ENCODE measurements at regions of chr5 and their contacts with region 1.

Region 1: DNA sequence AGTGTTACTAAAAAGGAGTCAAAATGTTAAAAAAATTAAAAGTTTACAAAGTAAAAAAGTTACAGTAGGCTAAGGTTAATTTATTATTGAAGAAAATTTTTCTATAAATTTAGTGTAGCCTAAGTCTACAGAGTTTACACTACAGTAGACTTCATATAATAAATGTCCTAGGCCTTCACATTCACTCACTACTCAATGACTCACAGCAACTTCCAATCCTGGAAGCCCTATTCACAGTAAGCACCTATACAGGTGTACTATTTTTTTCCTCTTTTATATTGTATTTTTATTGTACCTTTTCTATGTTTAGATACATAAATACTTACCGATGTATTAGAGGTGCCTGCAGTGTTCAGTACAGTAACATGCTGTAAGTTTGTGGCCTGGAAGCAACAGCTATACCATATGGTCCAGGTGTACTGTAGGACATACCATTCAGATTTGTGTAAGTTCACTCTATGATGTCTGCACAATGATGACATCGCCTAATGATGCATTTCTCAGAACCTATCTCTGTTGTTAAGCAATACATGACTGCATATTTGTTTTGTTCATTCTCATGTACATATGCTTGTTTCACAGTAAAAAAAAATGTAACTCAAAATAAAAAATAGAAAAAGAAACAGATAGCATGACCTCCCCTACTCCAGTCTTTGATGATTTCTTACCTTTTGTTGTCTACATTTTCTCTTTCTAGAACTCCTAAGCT is 64.7 kb downstream of the NR3C1 start:
- DNase-seq: peak; percentile 68
- H3K4me3 Mint-ChIP-seq: no peak overlapping the region
- H3K27ac Mint-ChIP-seq: peak overlapping the region; percentile 86
- H3K4me1 Mint-ChIP-seq: peaks cover 39% of the 10 kb centered on the region
- H3K27me3 Mint-ChIP-seq: no peaks in the 10 kb centered on the region
- CTCF ChIP-seq: no peak

Region 2: GRCh38 chr5:142713121-142713706 is 625.6 kb before region 1 on chr5:
- CTCF ChIA-PET with region 1: no interaction called
- POLR2A ChIA-PET with region 1: no interaction called
- intact Hi-C with region 1: no loop called
- DNase-seq: peak; percentile 95
- H3K4me3 Mint-ChIP-seq: peak overlapping the region; percentile 77
- H3K27ac Mint-ChIP-seq: peak overlapping the region; percentile 10
- H3K4me1 Mint-ChIP-seq: peaks cover 19% of the 10 kb centered on the region
- H3K27me3 Mint-ChIP-seq: no peaks in the 10 kb centered on the region
- CTCF ChIP-seq: peak; percentile 99

Region 3: DNA sequence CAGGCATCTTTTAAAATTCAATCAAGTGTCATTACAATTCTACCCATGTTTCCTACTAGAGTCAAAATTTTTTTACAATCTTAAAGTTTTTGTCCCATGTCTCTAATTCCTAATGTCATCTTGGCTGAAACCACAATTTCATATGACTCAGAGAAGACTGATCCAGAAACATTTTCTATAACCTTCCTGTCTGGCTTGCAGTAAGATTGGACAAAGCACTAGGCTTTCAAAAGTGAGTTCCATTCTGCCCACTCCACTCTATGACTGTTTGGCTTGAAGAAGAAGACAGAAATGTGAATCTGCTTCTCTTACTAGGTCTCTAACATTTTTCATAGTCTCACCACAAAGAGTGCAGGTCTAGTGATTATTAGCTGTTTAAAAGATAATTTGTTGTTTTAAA is 24.2 kb before region 1 on chr5:
- CTCF ChIA-PET with region 1: interaction called, 3 read pairs
- POLR2A ChIA-PET with region 1: interaction called, 15 read pairs
- intact Hi-C with region 1: no loop called
- DNase-seq: peak; percentile 68
- H3K4me3 Mint-ChIP-seq: no peak overlapping the region
- H3K27ac Mint-ChIP-seq: peak overlapping the region; percentile 73
- H3K4me1 Mint-ChIP-seq: peaks cover 69% of the 10 kb centered on the region
- H3K27me3 Mint-ChIP-seq: no peaks in the 10 kb centered on the region
- CTCF ChIP-seq: no peak

Region 4: GRCh38 chr5:143328589-143329220 is 10.1 kb before region 1 on chr5:
- CTCF ChIA-PET with region 1: interaction called, 3 read pairs
- POLR2A ChIA-PET with region 1: interaction called, 14 read pairs
- intact Hi-C with region 1: no loop called
- DNase-seq: no peak
- H3K4me3 Mint-ChIP-seq: no peak overlapping the region
- H3K27ac Mint-ChIP-seq: no peak overlapping the region
- H3K4me1 Mint-ChIP-seq: peaks cover 28% of the 10 kb centered on the region
- H3K27me3 Mint-ChIP-seq: no peaks in the 10 kb centered on the region
- CTCF ChIP-seq: no peak

Region 5: GRCh38 chr5:143355720-143356119 is 16.9 kb after region 1 on chr5:
- CTCF ChIA-PET with region 1: interaction called, 7 read pairs
- POLR2A ChIA-PET with region 1: interaction called, 10 read pairs
- intact Hi-C with region 1: no loop called
- DNase-seq: peak; percentile 98
- H3K4me3 Mint-ChIP-seq: no peak overlapping the region
- H3K27ac Mint-ChIP-seq: peak overlapping the region; percentile 44
- H3K4me1 Mint-ChIP-seq: peaks cover 43% of the 10 kb centered on the region
- H3K27me3 Mint-ChIP-seq: no peaks in the 10 kb centered on the region
- CTCF ChIP-seq: no peak

Region 6: DNA sequence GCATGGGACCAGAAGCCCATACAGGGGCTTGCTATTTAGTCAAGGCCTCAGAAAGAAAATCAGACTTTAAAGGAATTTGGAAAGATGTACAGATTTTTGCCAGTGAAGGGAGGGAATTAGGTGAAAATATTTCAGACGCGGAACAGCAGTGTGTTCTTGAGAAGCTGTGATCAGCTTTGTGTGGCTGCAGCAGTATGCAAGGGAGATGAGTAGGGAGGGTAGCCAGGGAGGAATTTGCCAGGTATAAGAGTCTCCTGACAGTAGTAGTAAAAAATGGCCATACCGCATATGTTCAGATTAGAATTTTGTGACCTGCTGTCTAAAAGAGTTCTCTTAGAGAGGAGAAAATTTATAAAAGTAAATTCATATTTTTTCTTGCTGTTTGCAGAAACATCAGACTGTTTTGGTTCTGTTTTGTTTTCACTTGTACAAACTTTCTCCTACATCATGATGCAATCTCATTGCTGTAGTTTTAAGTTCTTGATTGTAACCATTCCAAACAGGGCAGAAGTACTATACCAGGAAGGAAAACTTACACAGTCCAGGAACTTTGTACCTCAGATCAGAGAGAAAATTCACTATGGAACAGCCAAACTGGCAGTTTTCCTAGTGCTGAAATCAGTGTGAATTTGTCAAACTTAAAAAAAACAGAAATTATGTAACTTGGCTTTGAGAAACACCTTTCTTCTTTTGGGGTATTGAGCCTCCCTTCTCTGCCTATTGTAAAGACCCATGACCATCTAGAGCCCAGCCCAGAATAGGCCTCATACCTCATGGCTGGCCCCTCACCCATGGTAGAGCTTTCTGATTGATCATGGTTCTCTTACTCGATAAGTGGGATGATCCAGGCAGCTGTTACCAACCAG is 143.1 kb after region 1 on chr5:
- CTCF ChIA-PET with region 1: no interaction called
- POLR2A ChIA-PET with region 1: no interaction called
- intact Hi-C with region 1: no loop called
- DNase-seq: no peak
- H3K4me3 Mint-ChIP-seq: no peak overlapping the region
- H3K27ac Mint-ChIP-seq: no peak overlapping the region
- H3K4me1 Mint-ChIP-seq: peaks cover 7% of the 10 kb centered on the region
- H3K27me3 Mint-ChIP-seq: no peaks in the 10 kb centered on the region
- CTCF ChIP-seq: no peak